ENCODE measurements at regions of chr22 and their contacts with region 1.

Region 1: DNA sequence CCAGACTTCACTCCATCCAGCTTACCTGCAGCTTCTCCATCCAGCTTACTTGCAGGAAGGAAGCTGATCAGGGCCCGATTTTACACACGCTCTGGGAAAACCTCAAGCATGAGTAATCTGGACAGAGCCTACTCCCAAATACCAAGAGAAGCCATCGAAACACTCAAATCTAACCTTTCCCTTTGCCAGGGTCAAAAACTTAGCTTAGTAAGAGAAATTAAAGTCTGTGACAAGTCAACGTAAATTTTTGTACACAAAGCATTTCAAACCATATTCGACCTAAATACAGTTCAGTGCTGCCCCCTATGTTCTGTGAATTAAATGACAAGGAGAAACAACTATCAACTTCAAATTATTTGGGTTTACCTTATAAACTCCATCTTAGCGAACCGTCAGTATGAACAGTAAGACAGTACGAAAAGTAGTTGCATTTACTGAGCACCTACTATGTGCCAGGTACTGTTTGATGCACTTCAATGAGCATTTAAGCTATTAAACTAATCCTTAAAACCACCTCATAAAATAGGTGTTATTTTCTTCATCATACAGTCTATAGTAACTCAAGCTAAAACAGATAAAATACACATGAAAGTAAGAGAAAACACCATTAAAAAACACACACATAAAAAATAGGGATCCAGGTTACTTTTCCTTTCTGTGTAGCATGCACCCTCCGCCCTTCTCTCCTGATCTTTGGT is 36.9 kb downstream of the ARFGAP3 start:
- DNase-seq: peak; percentile 51
- H3K4me3 ChIP-seq: no peak overlapping the region
- H3K27ac ChIP-seq: no peak overlapping the region
- H3K27me3 ChIP-seq: no peaks in the 10 kb centered on the region
- CTCF ChIP-seq: peak; percentile 62

Region 2: GRCh38 chr22:42621505-42622002 is 198.7 kb before region 1 on chr22:
- CTCF ChIA-PET with region 1: interaction called, 86 read pairs
- POLR2A ChIA-PET with region 1: interaction called, 3 read pairs
- DNase-seq: no peak
- H3K4me3 ChIP-seq: no peak overlapping the region
- H3K27ac ChIP-seq: no peak overlapping the region
- H3K27me3 ChIP-seq: no peaks in the 10 kb centered on the region
- CTCF ChIP-seq: peak; percentile 92

Region 3: DNA sequence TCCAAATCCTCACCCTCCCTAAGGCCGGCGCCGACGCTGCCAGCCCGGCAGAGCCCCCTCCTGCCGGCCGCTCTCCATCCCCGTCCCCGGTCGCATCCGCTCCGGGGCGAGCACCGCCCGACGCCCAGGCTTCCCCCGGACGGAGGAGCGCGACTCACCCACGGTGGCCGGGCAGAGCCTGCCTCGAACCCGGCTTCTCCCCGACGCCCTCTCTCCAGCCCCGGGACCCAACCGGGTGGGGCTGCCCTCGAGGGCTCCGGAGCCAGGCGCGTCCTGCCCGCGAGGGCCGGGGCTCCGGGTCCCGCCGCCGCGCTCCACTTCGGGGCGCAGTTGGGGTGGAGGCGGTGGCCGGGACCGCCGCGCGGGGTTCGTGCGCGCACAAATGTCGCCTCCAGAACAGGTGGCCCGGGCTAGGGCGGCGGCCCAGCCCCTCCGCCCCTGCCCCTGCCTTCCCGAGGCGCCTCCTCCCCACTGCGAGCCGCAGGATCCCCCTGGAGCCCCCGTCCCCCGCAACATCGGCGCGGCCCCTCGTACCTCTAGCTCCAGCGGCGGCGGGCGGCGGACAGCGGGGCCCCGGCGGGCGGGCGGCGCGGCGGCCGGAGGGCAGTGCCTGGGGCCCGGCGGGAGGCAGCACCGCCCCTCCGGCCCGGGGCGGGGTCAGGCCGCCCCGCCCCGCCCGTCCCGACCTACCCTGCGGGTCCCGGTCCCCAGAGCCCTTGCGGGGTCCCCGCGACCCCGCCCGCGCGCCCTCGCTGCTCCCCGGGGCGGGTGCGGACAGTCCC is 99.8 kb before region 1 on chr22 and contains the start of gene A4GALT:
- CTCF ChIA-PET with region 1: no interaction called
- POLR2A ChIA-PET with region 1: no interaction called
- DNase-seq: no peak
- H3K4me3 ChIP-seq: peak within 1 kb of the TSS; percentile 63
- H3K27ac ChIP-seq: no peak within 1 kb of the TSS
- H3K27me3 ChIP-seq: peaks cover 6% of the 10 kb centered on the region
- CTCF ChIP-seq: no peak
- polyA plus RNA-seq, gene A4GALT: 1.8 and 2.7 TPM in 2 replicates

Region 4: DNA sequence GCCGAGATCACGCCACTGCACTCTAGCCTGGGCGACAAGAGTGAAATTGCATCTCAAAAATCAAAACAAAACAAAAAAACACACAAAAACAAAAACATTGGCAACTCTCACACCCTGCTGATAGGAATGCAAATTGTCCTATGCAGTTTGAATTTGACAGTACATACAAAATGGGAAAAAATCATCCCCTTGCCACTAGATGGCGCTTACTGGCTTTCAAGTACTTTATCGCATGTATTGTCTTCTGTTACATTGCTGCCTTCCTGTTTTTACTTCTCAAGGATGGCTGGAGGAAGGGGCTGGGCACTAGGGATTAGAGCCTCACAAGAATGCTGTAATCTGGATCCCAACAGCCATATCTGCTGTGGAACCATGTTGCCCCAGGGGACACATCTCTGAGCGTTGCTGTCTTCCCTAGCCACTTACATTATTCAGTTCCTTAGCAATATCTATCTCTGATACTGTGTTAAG is 40.1 kb before region 1 on chr22:
- CTCF ChIA-PET with region 1: interaction called, 27 read pairs
- POLR2A ChIA-PET with region 1: no interaction called
- DNase-seq: peak; percentile 90
- H3K4me3 ChIP-seq: no peak overlapping the region
- H3K27ac ChIP-seq: peak overlapping the region; percentile 31
- H3K27me3 ChIP-seq: no peaks in the 10 kb centered on the region
- CTCF ChIP-seq: peak; percentile 92

Region 5: GRCh38 chr22:42831712-42832111 is 11.5 kb after region 1 on chr22:
- CTCF ChIA-PET with region 1: interaction called, 31 read pairs
- POLR2A ChIA-PET with region 1: interaction called, 3 read pairs
- DNase-seq: no peak
- H3K4me3 ChIP-seq: no peak overlapping the region
- H3K27ac ChIP-seq: no peak overlapping the region
- H3K27me3 ChIP-seq: no peaks in the 10 kb centered on the region
- CTCF ChIP-seq: no peak

Region 6: GRCh38 chr22:42959576-42960509 is 139.6 kb after region 1 on chr22:
- CTCF ChIA-PET with region 1: no interaction called
- POLR2A ChIA-PET with region 1: no interaction called
- DNase-seq: peak; percentile 48
- H3K4me3 ChIP-seq: peak overlapping the region; percentile 3; the same call in 1 of the 2 replicates
- H3K27ac ChIP-seq: peak overlapping the region; percentile 59
- H3K27me3 ChIP-seq: no peaks in the 10 kb centered on the region
- CTCF ChIP-seq: no peak

Measured in AG04450 (cell line).